B cell (primary cell): ENCODE measurements at regions of chr14 and their contacts with region 1.

Region 1: GRCh38 chr14:50396631-50397390 is at the start of gene CDKL1:
- DNase-seq: peak; percentile 50
- ATAC-seq: peak; percentile 65
- H3K4me3 ChIP-seq: peak within 1 kb of the TSS; percentile 51 to 78 (median 69)
- H3K4me3 Mint-ChIP-seq: peak within 1 kb of the TSS; percentile 93
- H3K27ac ChIP-seq: peak within 1 kb of the TSS in 1 of 2 donors; percentile 3
- H3K27ac Mint-ChIP-seq: peak within 1 kb of the TSS; percentile 54
- H3K4me1 ChIP-seq: peaks cover 11 to 24% of the 10 kb centered on the region in 2 donors
- H3K4me1 Mint-ChIP-seq: peaks cover 41% of the 10 kb centered on the region
- H3K27me3 ChIP-seq: no peaks in the 10 kb centered on the region
- H3K27me3 Mint-ChIP-seq: peaks cover 2% of the 10 kb centered on the region
- CTCF ChIP-seq: no peak
- total RNA-seq, gene CDKL1: 7.9 and 8.9 TPM in 2 replicates

Region 2: GRCh38 chr14:50342221-50343078 is 54.4 kb before region 1 on chr14:
- CTCF ChIA-PET with region 1: interaction called, 3 read pairs
- POLR2A ChIA-PET with region 1: no interaction called
- intact Hi-C with region 1: loop called (anchors 2 kb)
- DNase-seq: peak; percentile 70
- ATAC-seq: peak; percentile 67
- H3K4me3 ChIP-seq: no peak overlapping the region
- H3K4me3 Mint-ChIP-seq: no peak overlapping the region
- H3K27ac ChIP-seq: no peak overlapping the region
- H3K27ac Mint-ChIP-seq: no peak overlapping the region
- H3K4me1 ChIP-seq: peaks cover 5 to 8% of the 10 kb centered on the region in 2 donors
- H3K4me1 Mint-ChIP-seq: peaks cover 13% of the 10 kb centered on the region
- H3K27me3 ChIP-seq: no peaks in the 10 kb centered on the region
- H3K27me3 Mint-ChIP-seq: no peaks in the 10 kb centered on the region
- CTCF ChIP-seq: peak; percentile 44

Region 3: DNA sequence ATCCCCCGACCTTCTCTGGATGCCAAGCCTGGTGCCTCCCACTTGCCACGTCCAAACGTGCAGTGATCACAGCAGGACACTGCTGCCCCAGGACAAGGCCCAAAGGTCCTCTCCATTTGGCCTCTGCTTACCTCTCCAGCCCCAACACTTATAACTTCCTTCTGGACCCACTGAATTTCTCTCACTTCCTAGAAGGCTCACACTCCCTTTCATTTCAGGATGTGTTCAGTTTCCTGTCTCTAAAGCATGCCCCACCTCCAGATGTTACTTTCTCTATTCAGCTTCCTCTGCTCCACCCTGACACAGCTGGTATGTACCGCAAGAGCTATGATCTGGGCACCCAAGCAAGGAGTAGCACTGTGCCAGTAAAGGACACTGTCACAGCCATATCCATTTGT is 33.1 kb before region 1 on chr14:
- CTCF ChIA-PET with region 1: interaction called, 3 read pairs
- POLR2A ChIA-PET with region 1: interaction called, 4 read pairs
- intact Hi-C with region 1: loop called (anchors 2 kb)
- DNase-seq: peak; percentile 87
- ATAC-seq: peak; percentile 98
- H3K4me3 ChIP-seq: peak overlapping the region; percentile 44 to 82 (median 58)
- H3K4me3 Mint-ChIP-seq: peak overlapping the region; percentile 84
- H3K27ac ChIP-seq: peak overlapping the region; percentile 87 to 90
- H3K27ac Mint-ChIP-seq: peak overlapping the region; percentile 88
- H3K4me1 ChIP-seq: peaks cover 21 to 33% of the 10 kb centered on the region in 2 donors
- H3K4me1 Mint-ChIP-seq: peaks cover 46% of the 10 kb centered on the region
- H3K27me3 ChIP-seq: no peaks in the 10 kb centered on the region
- H3K27me3 Mint-ChIP-seq: no peaks in the 10 kb centered on the region
- CTCF ChIP-seq: no peak

Region 4: DNA sequence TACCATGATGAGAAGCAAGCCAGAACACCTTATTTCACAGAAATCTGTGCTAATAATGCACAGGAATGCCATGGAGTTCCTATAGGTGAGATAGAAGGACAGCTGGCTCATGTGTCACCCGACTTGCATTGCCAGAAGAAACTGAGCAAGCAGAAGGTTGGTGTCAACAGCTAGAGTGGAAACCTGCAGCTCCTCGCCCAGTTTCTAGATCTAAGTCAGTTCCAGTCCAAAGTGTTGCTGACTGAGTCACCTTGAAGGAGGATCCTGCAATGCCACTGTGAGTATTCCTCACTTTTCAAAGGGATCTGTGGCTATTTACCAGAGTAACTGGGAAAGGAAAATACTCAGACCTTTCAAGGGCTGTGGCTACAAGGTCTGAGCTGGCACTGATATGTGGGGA is 17.2 kb before region 1 on chr14:
- CTCF ChIA-PET with region 1: no interaction called
- POLR2A ChIA-PET with region 1: interaction called, 12 read pairs
- intact Hi-C with region 1: no loop called
- DNase-seq: no peak
- ATAC-seq: no peak
- H3K4me3 ChIP-seq: no peak overlapping the region
- H3K4me3 Mint-ChIP-seq: no peak overlapping the region
- H3K27ac ChIP-seq: no peak overlapping the region
- H3K27ac Mint-ChIP-seq: no peak overlapping the region
- H3K4me1 ChIP-seq: no peaks in the 10 kb centered on the region
- H3K4me1 Mint-ChIP-seq: no peaks in the 10 kb centered on the region
- H3K27me3 ChIP-seq: no peaks in the 10 kb centered on the region
- H3K27me3 Mint-ChIP-seq: no peaks in the 10 kb centered on the region
- CTCF ChIP-seq: no peak

Region 5: DNA sequence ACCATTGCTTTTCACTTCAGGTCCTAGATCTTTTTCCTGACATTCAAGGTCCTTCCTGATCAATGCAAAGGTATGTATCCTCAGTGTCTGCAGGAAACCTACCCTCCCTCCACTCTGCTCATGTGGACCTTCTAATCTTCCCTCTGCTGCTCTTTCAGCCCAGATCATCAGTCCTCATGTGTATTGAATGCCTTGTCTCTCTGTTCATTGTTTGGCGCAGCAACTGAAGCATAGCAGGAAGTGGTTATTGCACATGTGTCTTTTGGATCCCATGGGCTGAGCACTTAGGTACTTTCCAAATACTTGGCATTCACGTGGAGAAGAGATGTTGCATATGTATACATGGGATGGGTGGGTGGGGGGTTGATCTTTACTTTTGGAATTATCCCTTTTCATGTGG is 438.5 kb after region 1 on chr14:
- CTCF ChIA-PET with region 1: no interaction called
- POLR2A ChIA-PET with region 1: no interaction called
- intact Hi-C with region 1: no loop called
- DNase-seq: peak; percentile 81
- ATAC-seq: peak; percentile 11
- H3K4me3 ChIP-seq: peak overlapping the region in 2 of 5 experiments; percentile 22 to 36
- H3K4me3 Mint-ChIP-seq: peak overlapping the region; percentile 55
- H3K27ac ChIP-seq: peak overlapping the region; percentile 22 to 58
- H3K27ac Mint-ChIP-seq: peak overlapping the region; percentile 87
- H3K4me1 ChIP-seq: peaks cover 36 to 37% of the 10 kb centered on the region in 2 donors
- H3K4me1 Mint-ChIP-seq: peaks cover 51% of the 10 kb centered on the region
- H3K27me3 ChIP-seq: no peaks in the 10 kb centered on the region
- H3K27me3 Mint-ChIP-seq: no peaks in the 10 kb centered on the region
- CTCF ChIP-seq: no peak